Activated CD4-positive, alpha-beta T cell treated with anti-CD3 and anti-CD28 coated beads for 36 hours (primary cell): ENCODE measurements at regions of chr3 and their contacts with region 1.

Region 1: DNA sequence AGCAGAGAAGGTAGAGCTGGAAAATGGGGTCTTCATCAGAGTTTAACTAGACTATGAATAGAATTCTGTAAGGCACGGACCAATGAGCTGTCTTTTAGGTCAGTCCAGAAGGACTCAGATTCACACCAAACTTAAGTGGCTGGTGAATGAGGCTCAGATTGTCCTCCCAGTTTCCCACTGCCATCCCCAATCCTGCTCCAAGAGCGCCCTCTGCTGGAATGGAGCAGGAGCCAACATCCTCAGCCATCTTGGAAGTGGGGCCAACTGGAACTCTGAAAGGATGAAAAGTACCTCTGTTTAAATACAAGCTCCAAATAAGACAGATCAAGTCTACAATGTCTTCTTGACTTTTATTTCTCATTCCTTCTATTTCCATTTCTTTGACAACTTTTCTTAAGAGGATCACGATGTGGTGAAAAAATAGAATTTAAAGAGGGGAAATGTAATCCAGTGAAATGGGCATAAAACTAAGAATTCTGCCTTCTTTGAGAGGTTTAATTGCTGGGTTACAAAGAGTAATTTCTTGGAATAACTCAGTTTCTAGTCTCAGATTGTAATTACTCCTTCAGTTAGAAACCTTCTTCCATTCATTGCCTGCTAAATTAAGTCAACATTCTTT is 217.1 kb upstream of the TPRG1 start:
- DNase-seq: peak; percentile 90
- ATAC-seq: peak; percentile 61
- H3K4me3 Mint-ChIP-seq: no peak overlapping the region
- H3K27ac Mint-ChIP-seq: no peak overlapping the region
- H3K4me1 Mint-ChIP-seq: peaks cover 46% of the 10 kb centered on the region
- H3K27me3 Mint-ChIP-seq: no peaks in the 10 kb centered on the region

Region 2: DNA sequence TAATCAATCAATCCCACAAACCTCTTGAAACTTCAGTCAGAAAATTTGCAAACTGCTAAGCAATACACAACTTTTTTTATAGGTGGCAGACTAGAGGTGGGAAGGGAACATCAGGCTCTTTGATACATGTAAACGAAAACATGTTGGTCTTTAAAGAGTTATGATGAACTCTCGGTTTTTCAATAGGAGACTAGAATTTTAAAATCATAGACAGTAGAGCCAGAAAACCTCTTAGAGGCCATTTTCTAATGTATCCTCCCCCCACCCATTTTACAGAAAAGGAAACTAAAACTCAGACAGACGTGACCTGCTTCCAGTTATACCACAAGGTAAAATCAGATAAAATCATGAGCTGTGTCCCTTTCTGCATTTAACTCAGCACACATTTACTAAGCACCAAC is 979.8 kb before region 1 on chr3:
- CTCF ChIA-PET with region 1: interaction called, 5 read pairs
- POLR2A ChIA-PET with region 1: no interaction called
- intact Hi-C with region 1: loop called in 1 of 2 experiments (anchors 10 kb)
- DNase-seq: no peak
- ATAC-seq: peak; percentile 61
- H3K4me3 Mint-ChIP-seq: peak overlapping the region; percentile 57
- H3K27ac Mint-ChIP-seq: peak overlapping the region; percentile 90
- H3K4me1 Mint-ChIP-seq: peaks cover 57% of the 10 kb centered on the region
- H3K27me3 Mint-ChIP-seq: no peaks in the 10 kb centered on the region

Region 3: DNA sequence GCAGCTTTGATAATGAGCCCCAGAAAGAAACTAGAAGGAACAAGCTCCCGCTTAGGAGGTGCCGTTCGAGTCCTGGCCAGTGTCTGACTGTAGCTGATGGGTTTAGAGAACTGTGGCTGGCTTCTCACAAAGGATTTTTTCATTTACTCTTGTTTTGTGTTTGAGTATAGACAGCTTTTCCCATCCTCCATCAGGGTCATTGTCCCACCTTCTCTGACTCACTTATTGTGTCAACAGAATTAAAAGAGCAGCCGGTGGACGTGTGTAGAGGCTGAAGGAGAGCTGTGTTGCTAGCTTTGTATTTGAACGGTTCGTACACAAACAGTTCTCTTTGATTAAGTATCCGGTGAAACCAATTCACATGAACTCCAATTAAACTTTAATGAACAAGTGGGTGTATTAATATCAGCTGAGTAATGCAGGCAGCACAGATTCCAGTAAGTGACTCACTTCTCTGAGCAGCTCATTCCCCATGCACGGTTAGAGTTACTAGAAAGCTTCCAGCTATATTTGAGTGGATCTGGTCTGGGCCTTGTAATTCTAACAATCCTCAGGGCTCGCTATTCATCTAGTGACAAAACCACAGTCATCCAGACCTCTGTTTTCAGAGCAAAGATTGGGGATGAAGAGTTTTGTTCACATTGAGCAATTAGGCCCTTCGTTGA is 659.7 kb before region 1 on chr3:
- CTCF ChIA-PET with region 1: interaction called, 8 read pairs
- POLR2A ChIA-PET with region 1: no interaction called
- intact Hi-C with region 1: loop called (anchors 5 kb)
- DNase-seq: peak; percentile 29
- ATAC-seq: peak; percentile 37
- H3K4me3 Mint-ChIP-seq: no peak overlapping the region
- H3K27ac Mint-ChIP-seq: peak overlapping the region; percentile 69
- H3K4me1 Mint-ChIP-seq: peaks cover 74% of the 10 kb centered on the region
- H3K27me3 Mint-ChIP-seq: no peaks in the 10 kb centered on the region

Region 4: GRCh38 chr3:188439080-188439479 is 515.6 kb before region 1 on chr3:
- CTCF ChIA-PET with region 1: no interaction called
- POLR2A ChIA-PET with region 1: no interaction called
- intact Hi-C with region 1: loop called in 1 of 2 experiments (anchors 5 kb)
- DNase-seq: peak; percentile 21
- ATAC-seq: peak; percentile 81
- H3K4me3 Mint-ChIP-seq: peak overlapping the region; percentile 5
- H3K27ac Mint-ChIP-seq: peak overlapping the region; percentile 61
- H3K4me1 Mint-ChIP-seq: peaks cover 37% of the 10 kb centered on the region
- H3K27me3 Mint-ChIP-seq: no peaks in the 10 kb centered on the region

Region 5: DNA sequence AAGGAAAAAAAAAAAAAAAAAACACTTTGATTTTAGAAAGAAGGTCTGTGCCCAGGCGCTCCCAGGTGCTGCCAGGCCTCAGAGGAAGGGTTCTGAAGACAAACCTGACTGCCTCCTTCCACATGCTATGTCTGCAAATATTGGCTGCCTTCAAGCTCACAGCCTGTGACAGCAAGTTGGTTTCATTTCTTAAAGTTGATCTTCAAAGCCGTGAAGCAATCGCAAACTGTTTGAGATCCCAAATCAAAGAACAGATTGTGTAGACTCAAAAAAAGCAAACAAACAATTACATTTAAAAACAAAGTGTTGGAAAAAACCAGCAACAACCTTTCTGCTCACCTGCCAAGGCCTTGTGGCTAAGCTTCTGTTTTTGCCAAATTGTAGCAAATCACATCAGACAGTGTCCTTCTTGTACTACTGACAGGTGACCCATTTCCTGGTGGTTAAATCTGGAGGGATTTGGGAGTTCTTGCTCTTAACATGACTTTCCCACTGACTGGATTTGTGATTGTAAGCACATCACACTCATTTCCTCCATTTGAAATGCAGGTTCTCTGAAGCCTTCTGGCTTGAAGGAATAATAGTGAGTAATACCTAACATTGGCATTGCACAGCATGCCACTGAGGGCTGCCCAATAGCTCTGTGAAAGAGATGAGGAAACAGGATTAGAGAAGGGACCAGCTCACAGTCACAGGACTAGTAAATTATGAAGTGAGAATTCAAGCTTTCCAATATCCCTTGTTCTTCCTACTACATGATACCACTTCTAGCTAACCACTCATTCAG is 298.3 kb before region 1 on chr3:
- CTCF ChIA-PET with region 1: no interaction called
- POLR2A ChIA-PET with region 1: no interaction called
- intact Hi-C with region 1: no loop called
- DNase-seq: no peak
- ATAC-seq: peak; percentile 53
- H3K4me3 Mint-ChIP-seq: no peak overlapping the region
- H3K27ac Mint-ChIP-seq: no peak overlapping the region
- H3K4me1 Mint-ChIP-seq: no peaks in the 10 kb centered on the region
- H3K27me3 Mint-ChIP-seq: no peaks in the 10 kb centered on the region

Region 6: GRCh38 chr3:188749010-188749617 is 205.6 kb before region 1 on chr3:
- CTCF ChIA-PET with region 1: interaction called, 6 read pairs
- POLR2A ChIA-PET with region 1: no interaction called
- intact Hi-C with region 1: loop called (anchors 2 kb)
- DNase-seq: peak; percentile 59
- ATAC-seq: no peak
- H3K4me3 Mint-ChIP-seq: no peak overlapping the region
- H3K27ac Mint-ChIP-seq: no peak overlapping the region
- H3K4me1 Mint-ChIP-seq: peaks cover 30% of the 10 kb centered on the region
- H3K27me3 Mint-ChIP-seq: no peaks in the 10 kb centered on the region

Region 7: DNA sequence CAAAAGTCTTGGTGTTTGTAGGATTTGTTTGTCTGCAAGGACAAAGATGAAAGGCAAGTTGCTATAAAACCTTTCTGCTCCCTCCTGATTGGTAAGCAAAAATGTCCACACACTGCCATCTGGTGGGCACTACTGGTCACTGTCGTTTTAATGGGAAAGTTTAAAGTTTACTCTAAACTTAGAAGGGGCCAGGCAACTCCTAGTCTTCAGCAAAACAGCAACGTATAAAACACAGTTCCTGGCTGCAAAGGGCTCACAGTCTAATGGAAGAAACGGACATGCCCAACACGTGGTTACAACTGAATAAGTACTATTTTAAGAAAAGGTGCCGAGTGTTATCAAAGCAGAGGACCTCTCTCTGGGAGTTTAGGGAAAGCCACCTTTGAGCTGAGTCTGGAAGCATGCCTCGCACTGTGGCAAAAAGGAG is 193.4 kb after region 1 on chr3:
- CTCF ChIA-PET with region 1: interaction called, 9 read pairs
- POLR2A ChIA-PET with region 1: no interaction called
- intact Hi-C with region 1: loop called in 1 of 2 experiments (anchors 2 kb)
- DNase-seq: peak; percentile 81
- ATAC-seq: peak; percentile 66
- H3K4me3 Mint-ChIP-seq: no peak overlapping the region
- H3K27ac Mint-ChIP-seq: no peak overlapping the region
- H3K4me1 Mint-ChIP-seq: peaks cover 17% of the 10 kb centered on the region
- H3K27me3 Mint-ChIP-seq: peaks cover 3% of the 10 kb centered on the region